ENCODE measurements at regions of chr20 and their contacts with region 1.

Region 1: GRCh38 chr20:34111702-34112599 is at the start of gene EIF2S2:
- DNase-seq: peak; percentile 94 to 98
- ATAC-seq: peak; percentile 95 to 97 (median 95)
- H3K4me3 ChIP-seq: peak within 1 kb of the TSS; percentile 99
- H3K27ac ChIP-seq: peak within 1 kb of the TSS; percentile 99
- H3K4me1 ChIP-seq: peaks cover 33% of the 10 kb centered on the region
- H3K27me3 ChIP-seq: no peaks in the 10 kb centered on the region
- CTCF ChIP-seq: no peak
- total RNA-seq, gene EIF2S2: 49.4 to 88.9 (median 82.8) TPM

Region 2: DNA sequence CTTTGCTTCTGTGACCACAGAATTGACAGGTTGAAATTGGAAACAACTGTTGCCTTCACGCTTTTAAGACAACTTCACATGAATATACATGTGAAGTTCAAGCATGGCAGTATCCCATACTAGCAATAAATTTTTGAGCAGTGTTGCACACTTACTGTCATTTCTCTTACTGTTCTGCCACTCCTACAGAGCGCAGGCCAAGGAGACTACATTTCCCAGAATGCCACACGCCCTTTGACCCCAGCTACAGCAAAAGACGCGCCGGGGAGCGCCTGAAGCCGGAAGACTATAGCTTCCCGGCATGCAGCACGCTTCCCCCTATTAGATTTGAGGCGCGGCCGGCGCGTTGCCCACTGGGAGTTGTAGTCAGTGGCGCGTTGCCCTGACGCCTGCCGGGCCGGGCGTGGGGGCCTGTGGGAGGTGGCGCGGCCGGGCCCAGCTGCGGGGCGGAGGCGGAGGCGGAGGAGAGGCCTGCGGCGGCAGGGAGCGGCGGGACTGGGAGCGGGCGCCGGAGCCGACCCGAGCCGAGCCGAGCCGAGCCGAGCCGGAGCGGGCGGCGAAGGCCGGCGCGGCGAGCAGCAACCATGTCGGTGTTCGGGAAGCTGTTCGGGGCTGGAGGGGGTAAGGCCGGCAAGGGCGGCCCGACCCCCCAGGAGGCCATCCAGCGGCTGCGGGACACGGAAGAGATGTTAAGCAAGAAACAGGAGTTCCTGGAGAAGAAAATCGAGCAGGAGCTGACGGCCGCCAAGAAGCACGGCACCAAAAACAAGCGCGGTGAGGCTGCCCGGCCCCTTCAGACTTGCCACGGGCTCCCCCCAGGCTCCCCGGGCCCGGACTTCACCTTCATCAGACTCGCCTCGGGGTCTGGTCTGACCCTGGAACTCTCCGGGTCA is 300.8 kb before region 1 on chr20 and contains the start of gene CHMP4B:
- intact Hi-C with region 1: loop called in 1 of 2 experiments (anchors 2 kb)
- DNase-seq: peak; percentile 99 to 100
- ATAC-seq: peak; percentile 96 to 98 (median 97)
- H3K4me3 ChIP-seq: peak within 1 kb of the TSS; percentile 94
- H3K27ac ChIP-seq: peak within 1 kb of the TSS; percentile 95
- H3K4me1 ChIP-seq: peaks cover 37% of the 10 kb centered on the region
- H3K27me3 ChIP-seq: no peaks in the 10 kb centered on the region
- CTCF ChIP-seq: no peak
- total RNA-seq, gene CHMP4B: 72.5 to 151 (median 119) TPM

Region 3: DNA sequence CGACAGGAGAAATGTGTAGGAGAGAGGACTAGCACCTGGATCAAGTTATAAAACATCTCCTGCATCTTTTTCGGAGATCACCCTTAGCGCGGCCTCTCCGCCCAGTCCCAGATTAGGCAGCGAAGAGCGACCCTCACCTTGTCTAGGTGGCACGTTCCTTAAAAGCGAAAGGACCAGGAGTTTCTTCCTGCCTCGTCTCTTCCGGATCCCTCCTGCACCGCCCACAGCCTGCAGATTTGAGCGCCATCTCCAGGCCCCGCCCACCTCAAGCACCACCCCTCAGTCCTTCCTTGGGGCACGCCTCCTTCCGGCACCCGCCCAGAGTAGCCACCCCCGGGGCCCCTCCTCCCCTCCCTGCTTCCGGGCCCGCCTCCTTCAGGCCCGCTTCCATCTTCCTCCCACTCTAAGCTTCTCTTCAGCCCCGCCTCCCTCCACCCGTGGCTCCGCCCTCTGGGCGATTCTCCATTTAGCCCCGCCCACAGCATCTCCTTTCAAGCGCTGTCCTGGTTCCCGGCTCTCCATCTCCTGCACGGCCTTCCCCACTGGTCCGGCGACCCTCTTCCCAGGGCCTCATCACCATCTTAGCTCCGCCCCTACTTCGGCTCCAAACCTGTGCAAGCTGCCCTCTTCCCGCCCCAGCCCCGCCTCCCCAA is 118.9 kb before region 1 on chr20:
- intact Hi-C with region 1: loop called in 1 of 2 experiments (anchors 1 kb)
- DNase-seq: peak; percentile 99 to 100
- ATAC-seq: peak; percentile 91 to 94 (median 92)
- H3K4me3 ChIP-seq: peak overlapping the region; percentile 80
- H3K27ac ChIP-seq: peak overlapping the region; percentile 96
- H3K4me1 ChIP-seq: peaks cover 39% of the 10 kb centered on the region
- H3K27me3 ChIP-seq: no peaks in the 10 kb centered on the region
- CTCF ChIP-seq: no peak

Region 4: DNA sequence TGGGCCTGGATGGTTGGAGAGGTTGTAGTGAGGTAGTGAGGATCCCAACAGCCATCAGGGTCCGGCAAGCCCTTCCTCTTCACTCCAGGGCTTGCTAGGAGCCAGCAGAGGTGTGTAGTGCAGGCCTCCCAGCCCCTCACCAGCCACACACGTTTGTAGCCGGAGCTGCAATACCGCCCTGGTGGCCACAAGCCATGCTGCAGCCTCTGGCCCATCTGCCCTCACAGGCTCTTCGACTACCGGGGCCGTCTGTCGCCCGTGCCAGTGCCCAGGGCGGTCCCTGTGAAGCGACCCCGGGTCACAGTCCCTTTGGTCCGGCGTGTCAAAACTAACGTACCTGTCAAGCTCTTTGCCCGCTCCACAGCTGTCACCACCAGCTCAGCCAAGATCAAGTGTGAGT is 36.3 kb before region 1 on chr20:
- intact Hi-C with region 1: loop called in 1 of 2 experiments (anchors 5 kb)
- DNase-seq: no peak
- ATAC-seq: peak in 3 of 4 donors; percentile 44 to 49 (median 46)
- H3K4me3 ChIP-seq: no peak overlapping the region
- H3K27ac ChIP-seq: no peak overlapping the region
- H3K4me1 ChIP-seq: no peaks in the 10 kb centered on the region
- H3K27me3 ChIP-seq: no peaks in the 10 kb centered on the region
- CTCF ChIP-seq: no peak

Region 5: DNA sequence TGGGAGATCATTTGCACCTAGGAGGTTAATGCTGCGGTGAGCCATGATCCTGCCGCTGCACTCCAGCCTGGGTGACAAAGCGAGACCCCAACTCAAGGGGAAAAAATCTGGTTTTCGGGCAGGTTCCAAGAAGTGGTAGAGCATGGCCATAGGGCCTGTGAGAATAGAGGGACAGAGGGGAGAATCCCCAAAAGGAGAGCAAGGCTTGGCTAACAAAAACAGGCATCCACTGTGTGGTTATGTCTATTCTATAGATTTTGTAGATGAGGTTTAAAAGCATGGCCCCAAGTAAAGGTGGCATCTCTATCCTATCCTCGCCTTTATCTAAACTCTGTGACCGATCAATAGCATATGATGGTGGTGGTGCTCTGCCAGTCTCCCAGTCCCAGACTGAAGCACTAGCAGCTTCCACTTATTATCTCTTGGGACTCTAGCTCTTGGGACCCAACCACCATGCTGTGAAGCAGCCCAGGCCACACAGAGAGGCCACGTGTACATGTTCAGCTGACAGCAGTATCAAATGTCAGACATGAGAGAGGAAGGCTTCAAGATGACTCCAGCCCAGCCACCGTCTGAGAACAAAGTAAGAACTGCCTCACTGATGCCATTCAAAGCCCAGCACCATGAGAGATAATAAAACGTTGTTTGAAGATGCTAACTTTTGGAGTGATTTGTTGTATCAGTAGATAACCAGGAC is 27.6 kb before region 1 on chr20:
- intact Hi-C with region 1: loop called in 1 of 2 experiments (anchors 2 kb)
- DNase-seq: no peak
- ATAC-seq: peak; percentile 25 to 53 (median 32)
- H3K4me3 ChIP-seq: no peak overlapping the region
- H3K27ac ChIP-seq: peak overlapping the region; percentile 14
- H3K4me1 ChIP-seq: peaks cover 24% of the 10 kb centered on the region
- H3K27me3 ChIP-seq: no peaks in the 10 kb centered on the region
- CTCF ChIP-seq: no peak

Region 6: GRCh38 chr20:34095825-34096224 is 16.1 kb before region 1 on chr20:
- intact Hi-C with region 1: no loop called
- DNase-seq: no peak
- ATAC-seq: no peak
- H3K4me3 ChIP-seq: no peak overlapping the region
- H3K27ac ChIP-seq: no peak overlapping the region
- H3K4me1 ChIP-seq: peaks cover 3% of the 10 kb centered on the region
- H3K27me3 ChIP-seq: no peaks in the 10 kb centered on the region
- CTCF ChIP-seq: no peak

Measured in psoas muscle (tissue), 8 donors.